ENCODE measurements at regions of chrX and their contacts with region 1.

Region 1: GRCh38 chrX:136909706-136910564 is 29.4 kb upstream of the RBMX start:
- DNase-seq: peak; percentile 76
- H3K4me3 ChIP-seq: peak overlapping the region; percentile 56 to 87
- H3K27ac ChIP-seq: peak overlapping the region; percentile 67 to 84
- H3K4me1 ChIP-seq: peaks cover 0 to 4% of the 10 kb centered on the region in 2 experiments; a peak in 1 of 4 replicates
- H3K27me3 ChIP-seq: no peaks in the 10 kb centered on the region; the same call in 1 of the 2 replicates
- CTCF ChIP-seq: no peak
- EP300 ChIP-seq: no peak
- RAD21 ChIP-seq: no peak

Region 2: DNA sequence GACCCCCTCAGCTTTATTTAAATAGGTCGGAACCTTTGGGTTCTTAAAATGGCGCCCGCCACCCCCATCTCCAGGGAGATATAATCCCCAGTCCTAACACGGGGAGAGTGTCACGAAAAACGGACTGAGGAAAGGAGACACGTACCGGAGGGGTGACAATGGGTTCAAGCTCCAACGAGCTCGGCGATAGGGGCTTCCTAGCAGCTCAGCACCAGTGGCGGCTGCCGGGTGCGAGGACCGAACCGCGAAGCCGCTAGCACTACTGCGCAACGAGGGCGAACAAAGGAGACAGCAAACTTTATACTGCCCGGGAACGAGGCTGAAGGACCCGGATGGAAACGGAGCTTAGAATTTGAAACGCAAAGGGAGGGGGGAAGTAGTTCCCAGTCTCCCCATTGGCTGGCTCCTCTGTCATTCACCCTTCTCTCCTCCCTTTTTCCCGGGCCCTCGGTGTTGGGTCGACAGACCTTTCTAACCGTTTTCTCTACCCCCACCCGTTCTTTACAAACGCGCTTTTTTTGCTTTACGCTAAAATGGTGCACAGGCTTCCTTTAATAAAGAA is 29.4 kb before region 1 on chrX and contains the start of gene RBMX:
- CTCF ChIA-PET with region 1: no interaction called
- POLR2A ChIA-PET with region 1: interaction called, 11 read pairs
- DNase-seq: peak; percentile 87
- H3K4me3 ChIP-seq: peak within 1 kb of the TSS; percentile 69 to 77
- H3K27ac ChIP-seq: peak within 1 kb of the TSS; percentile 77 to 86
- H3K4me1 ChIP-seq: peaks cover 0 to 2% of the 10 kb centered on the region in 2 experiments; a peak in 1 of 4 replicates
- H3K27me3 ChIP-seq: no peaks in the 10 kb centered on the region
- CTCF ChIP-seq: no peak
- EP300 ChIP-seq: 0 out of 4 replicates have a peak, but pooled peaks of 1 of the 2 experiments have one; percentile 13
- RAD21 ChIP-seq: no peak
- polyA plus RNA-seq, gene RBMX: 131 and 139 TPM in 2 replicates